ENCODE measurements at regions of chr5 and their contacts with region 1.

Region 1: GRCh38 chr5:72108202-72109061 is 1.2 kb downstream of the MAP1B start:
- DNase-seq: no peak
- H3K4me3 ChIP-seq: peak overlapping the region; percentile 89 to 90 (median 90)
- H3K27ac ChIP-seq: peak overlapping the region; percentile 90 to 93 (median 91)
- H3K4me1 ChIP-seq: peaks cover 7 to 58% (median 50%) of the 10 kb centered on the region in 4 donors
- H3K27me3 ChIP-seq: peaks cover 0 to 3% (median 0%) of the 10 kb centered on the region in 4 donors
- CTCF ChIP-seq: no peak
- EP300 ChIP-seq: no peak
- POLR2A ChIP-seq: no peak

Region 2: DNA sequence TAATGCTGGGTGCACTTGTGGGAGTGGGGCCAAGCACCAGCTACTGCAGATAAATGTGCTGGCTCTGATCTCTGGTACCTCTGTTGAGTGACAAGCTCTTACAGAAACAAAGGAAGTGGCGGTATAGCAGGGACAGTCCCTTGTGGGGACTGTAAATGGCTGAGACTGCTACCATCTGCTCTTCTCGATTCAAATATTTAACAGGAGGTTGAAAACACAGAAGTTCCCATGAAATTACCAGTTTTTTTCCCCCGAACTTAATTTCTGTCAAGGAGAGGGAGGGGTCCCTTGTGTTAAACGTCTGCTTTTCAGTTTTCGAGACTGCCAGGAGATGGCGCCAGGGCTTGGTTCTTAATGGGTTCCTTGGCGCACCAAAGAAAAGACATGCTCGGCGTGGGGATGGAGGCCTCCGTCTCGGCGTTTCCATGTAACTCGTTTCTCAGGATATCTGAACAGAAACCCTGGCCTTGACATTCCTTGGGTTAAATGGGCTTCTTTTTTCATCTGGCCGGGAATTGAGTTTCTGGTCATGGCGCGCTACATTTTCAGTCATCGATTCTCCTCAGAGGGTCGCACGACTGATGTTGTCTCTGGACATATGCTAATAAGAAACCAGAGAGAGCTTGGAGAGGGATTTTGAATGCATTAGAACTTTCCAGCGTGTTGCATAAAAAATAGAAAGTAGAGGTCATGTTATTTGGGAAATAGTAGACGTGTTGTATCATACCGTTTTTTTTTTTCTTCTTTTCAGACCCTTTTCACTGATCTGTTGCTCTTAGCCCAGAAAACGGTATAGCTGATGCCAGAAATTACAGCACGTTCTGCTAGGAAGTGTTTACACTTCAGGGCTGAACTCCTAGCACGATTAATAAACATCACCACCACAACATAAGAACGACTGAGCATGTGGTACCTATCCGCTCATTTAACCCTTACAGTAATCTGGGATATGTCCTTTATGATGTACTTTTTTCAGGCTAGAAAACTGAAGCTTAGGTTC is 325.4 kb before region 1 on chr5:
- intact Hi-C with region 1: loop called (anchors 2 kb)
- DNase-seq: no peak
- H3K4me3 ChIP-seq: peak overlapping the region; percentile 32 to 42 (median 36)
- H3K27ac ChIP-seq: peak overlapping the region; percentile 59 to 80 (median 72)
- H3K4me1 ChIP-seq: peaks cover 4 to 24% (median 21%) of the 10 kb centered on the region in 4 donors
- H3K27me3 ChIP-seq: no peaks in the 10 kb centered on the region
- CTCF ChIP-seq: peak; percentile 82 to 89 (median 83)
- EP300 ChIP-seq: no peak
- POLR2A ChIP-seq: no peak

Region 3: DNA sequence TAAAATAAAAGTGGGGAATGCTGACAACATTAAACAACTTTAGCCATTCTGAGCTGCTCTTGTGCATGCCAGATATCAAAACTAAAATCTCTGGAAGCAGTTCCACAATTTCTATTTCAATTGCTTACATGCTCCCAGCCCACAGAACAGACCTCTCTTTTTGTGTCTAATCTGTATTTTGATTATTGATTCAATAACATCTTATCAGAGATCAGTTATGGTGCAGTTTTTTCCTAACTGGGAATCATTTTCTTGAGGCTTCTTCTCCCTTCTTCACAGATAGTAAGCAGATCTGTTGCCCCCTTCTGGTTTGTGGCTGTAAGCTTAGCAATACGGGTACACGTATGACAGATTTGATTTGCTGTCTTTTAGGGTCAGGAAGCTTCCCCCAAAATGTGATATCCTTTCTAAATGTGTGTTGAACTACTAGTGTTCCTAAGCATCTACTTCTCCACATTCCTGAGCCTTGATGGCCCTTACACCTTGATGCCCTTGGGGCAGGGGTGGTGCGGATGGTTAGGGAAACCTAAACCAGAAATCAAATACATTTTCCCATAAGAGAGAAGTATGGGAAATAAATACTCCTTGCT is 172.2 kb after region 1 on chr5:
- intact Hi-C with region 1: loop called (anchors 5 kb)
- DNase-seq: no peak
- H3K4me3 ChIP-seq: no peak overlapping the region
- H3K27ac ChIP-seq: peak overlapping the region; percentile 66 to 75 (median 72)
- H3K4me1 ChIP-seq: peaks cover 8 to 40% (median 38%) of the 10 kb centered on the region in 4 donors
- H3K27me3 ChIP-seq: no peaks in the 10 kb centered on the region
- CTCF ChIP-seq: peak; percentile 45 to 64 (median 46)
- EP300 ChIP-seq: no peak
- POLR2A ChIP-seq: no peak

Region 4: DNA sequence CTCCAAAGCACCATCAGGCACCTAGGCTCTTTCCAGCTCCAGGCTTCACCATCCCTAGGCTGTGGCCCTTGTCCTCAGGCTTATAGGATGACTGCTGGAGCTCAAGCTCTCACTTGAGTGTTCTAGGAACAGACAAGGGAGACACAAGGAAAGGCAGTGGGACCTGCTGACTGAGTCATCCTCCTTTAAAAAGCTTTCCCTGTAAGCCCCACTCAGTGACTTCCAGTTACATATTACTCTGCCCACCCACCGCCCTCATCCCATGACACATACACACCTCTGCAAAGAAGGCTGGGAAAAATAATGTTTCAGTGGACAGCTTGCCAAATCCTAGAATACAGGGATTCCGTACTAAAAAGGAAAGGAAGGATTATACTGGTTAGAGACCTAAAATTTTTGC is 553.0 kb after region 1 on chr5:
- intact Hi-C with region 1: no loop called
- DNase-seq: no peak
- H3K4me3 ChIP-seq: no peak overlapping the region
- H3K27ac ChIP-seq: no peak overlapping the region
- H3K4me1 ChIP-seq: peaks cover 0 to 18% (median 0%) of the 10 kb centered on the region in 4 donors
- H3K27me3 ChIP-seq: no peaks in the 10 kb centered on the region
- CTCF ChIP-seq: no peak
- EP300 ChIP-seq: no peak
- POLR2A ChIP-seq: no peak

Measured in esophagus muscularis mucosa (tissue), 4 donors.